Activated T-helper 1 cell treated with anti-CD3 and anti-CD28 coated beads, Interleukin-12 subunit alpha, Interleukin-12 subunit beta, Interleukin-2, Interleukin-4 antibody, amounts not matched to agents 30 ng/mL and 10 ng/mL and 1 ng/mL, durations not matched to agents 14 hours and 24 hours and 36 hours (primary cell): ENCODE measurements at regions of chr18 and their contacts with region 1.

Region 1: DNA sequence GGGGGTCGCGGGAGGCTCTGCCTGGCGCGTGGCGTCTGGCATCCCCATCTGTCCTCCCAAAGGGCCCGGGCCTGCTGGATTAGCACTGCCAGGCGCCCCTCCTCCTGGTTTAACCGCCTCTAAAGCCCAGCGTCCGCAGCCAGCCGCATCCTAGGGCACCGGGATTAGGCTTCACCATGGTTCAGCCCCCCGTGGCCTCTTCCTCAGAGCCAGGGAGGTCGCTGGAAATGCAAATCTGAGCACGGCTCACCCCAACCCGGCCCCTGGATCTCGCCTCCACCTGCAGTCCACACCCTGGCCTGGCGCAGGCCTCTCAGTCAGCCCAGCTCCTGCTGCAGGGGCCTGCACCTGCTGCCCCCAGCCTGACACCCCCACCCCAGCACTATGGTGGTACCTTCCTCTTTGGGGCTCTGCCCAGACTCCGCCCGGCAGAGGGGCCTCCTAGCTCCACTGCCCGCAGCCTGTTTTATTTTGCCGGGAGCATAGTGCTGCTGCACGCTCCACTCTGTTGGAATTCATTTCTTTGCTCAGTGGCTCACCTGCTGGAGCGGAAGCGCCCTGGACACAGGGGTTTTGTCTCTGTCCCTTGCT is 13.2 kb downstream of the PRELID3A start:
- DNase-seq: no peak
- H3K4me3 Mint-ChIP-seq: peak overlapping the region; percentile 77
- H3K27ac Mint-ChIP-seq: no peak overlapping the region
- H3K4me1 Mint-ChIP-seq: peaks cover 10% of the 10 kb centered on the region
- H3K27me3 Mint-ChIP-seq: peaks cover 9% of the 10 kb centered on the region

Region 2: GRCh38 chr18:12408247-12408869 is 12.6 kb before region 1 on chr18:
- intact Hi-C with region 1: loop called (anchors 1 kb)
- DNase-seq: no peak
- H3K4me3 Mint-ChIP-seq: peak overlapping the region; percentile 76
- H3K27ac Mint-ChIP-seq: no peak overlapping the region
- H3K4me1 Mint-ChIP-seq: peaks cover 27% of the 10 kb centered on the region
- H3K27me3 Mint-ChIP-seq: peaks cover 47% of the 10 kb centered on the region

Region 3: GRCh38 chr18:13279181-13280069 is 858.5 kb after region 1 on chr18:
- intact Hi-C with region 1: no loop called
- DNase-seq: no peak
- H3K4me3 Mint-ChIP-seq: peak overlapping the region; percentile 70
- H3K27ac Mint-ChIP-seq: peak overlapping the region; percentile 75
- H3K4me1 Mint-ChIP-seq: peaks cover 83% of the 10 kb centered on the region
- H3K27me3 Mint-ChIP-seq: no peaks in the 10 kb centered on the region